ENCODE measurements at regions of chr6 and their contacts with region 1.

Region 1: GRCh38 chr6:158026054-158026900 is 44.6 kb downstream of the SYNJ2 start:
- DNase-seq: peak; percentile 90
- H3K4me3 Mint-ChIP-seq: peak overlapping the region; percentile 77
- H3K27ac Mint-ChIP-seq: peak overlapping the region; percentile 98
- H3K4me1 Mint-ChIP-seq: peaks cover 29% of the 10 kb centered on the region
- H3K27me3 Mint-ChIP-seq: no peaks in the 10 kb centered on the region

Region 2: DNA sequence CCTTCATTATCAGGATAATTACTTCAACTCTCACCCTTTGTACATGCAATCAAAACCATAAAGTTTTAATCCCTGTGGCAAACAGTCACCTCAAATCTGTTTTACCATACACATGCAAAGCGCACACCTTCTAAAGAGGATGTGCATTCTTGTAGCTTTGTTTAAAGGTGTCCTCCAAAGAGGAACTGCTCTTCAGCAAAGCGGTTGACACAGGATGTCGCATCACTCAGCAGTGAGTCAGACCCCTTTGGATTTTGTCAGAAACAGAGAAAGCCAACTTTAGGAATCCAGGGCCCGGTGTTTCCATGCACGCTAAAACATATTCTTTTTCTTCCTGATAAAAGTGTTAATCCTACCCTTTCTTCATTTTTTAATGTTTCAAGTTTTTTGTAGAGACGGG is 1517.4 kb before region 1 on chr6:
- CTCF ChIA-PET with region 1: no interaction called
- POLR2A ChIA-PET with region 1: no interaction called
- intact Hi-C with region 1: no loop called
- DNase-seq: no peak
- H3K4me3 Mint-ChIP-seq: no peak overlapping the region
- H3K27ac Mint-ChIP-seq: no peak overlapping the region
- H3K4me1 Mint-ChIP-seq: no peaks in the 10 kb centered on the region
- H3K27me3 Mint-ChIP-seq: peaks cover 11% of the 10 kb centered on the region

Region 3: GRCh38 chr6:157688960-157689599 is 337.2 kb before region 1 on chr6:
- CTCF ChIA-PET with region 1: no interaction called
- POLR2A ChIA-PET with region 1: no interaction called
- intact Hi-C with region 1: no loop called
- DNase-seq: no peak
- H3K4me3 Mint-ChIP-seq: no peak overlapping the region
- H3K27ac Mint-ChIP-seq: no peak overlapping the region
- H3K4me1 Mint-ChIP-seq: no peaks in the 10 kb centered on the region
- H3K27me3 Mint-ChIP-seq: peaks cover 3% of the 10 kb centered on the region

Region 4: GRCh38 chr6:157699777-157700636 is 326.3 kb before region 1 on chr6:
- CTCF ChIA-PET with region 1: no interaction called
- POLR2A ChIA-PET with region 1: no interaction called
- intact Hi-C with region 1: no loop called
- DNase-seq: no peak
- H3K4me3 Mint-ChIP-seq: no peak overlapping the region
- H3K27ac Mint-ChIP-seq: no peak overlapping the region
- H3K4me1 Mint-ChIP-seq: no peaks in the 10 kb centered on the region
- H3K27me3 Mint-ChIP-seq: peaks cover 3% of the 10 kb centered on the region

Region 5: DNA sequence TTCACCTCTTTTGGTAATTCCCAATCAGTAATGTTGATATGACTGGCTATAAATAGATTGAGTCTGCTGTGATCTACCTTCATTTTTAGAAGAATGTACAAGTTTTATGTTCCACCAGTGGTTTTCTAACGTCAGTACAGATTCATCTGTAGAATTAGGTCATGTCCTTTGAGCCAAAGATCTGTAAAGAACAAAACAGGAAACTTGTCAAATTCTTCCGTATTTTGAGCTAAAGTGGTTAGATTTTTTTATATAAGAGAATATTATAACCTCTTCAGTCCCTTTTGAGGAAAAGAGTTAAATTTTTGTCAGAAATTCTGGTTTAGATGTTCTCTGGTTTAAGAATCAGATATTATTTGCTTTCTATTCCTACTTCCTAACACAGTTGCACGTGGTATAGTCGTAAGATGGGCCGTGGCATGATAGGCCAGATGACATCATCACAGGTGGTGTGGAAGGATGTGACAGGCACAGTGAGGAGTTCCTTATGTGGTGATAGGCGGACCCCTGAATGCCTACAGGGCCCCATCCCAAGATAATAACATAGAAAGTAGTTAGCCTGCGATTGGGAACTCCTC is 141.0 kb before region 1 on chr6:
- CTCF ChIA-PET with region 1: interaction called, 4 read pairs
- POLR2A ChIA-PET with region 1: interaction called, 3 read pairs
- intact Hi-C with region 1: loop called (anchors 2 kb)
- DNase-seq: peak; percentile 75
- H3K4me3 Mint-ChIP-seq: no peak overlapping the region
- H3K27ac Mint-ChIP-seq: peak overlapping the region; percentile 94
- H3K4me1 Mint-ChIP-seq: peaks cover 68% of the 10 kb centered on the region
- H3K27me3 Mint-ChIP-seq: no peaks in the 10 kb centered on the region

Region 6: DNA sequence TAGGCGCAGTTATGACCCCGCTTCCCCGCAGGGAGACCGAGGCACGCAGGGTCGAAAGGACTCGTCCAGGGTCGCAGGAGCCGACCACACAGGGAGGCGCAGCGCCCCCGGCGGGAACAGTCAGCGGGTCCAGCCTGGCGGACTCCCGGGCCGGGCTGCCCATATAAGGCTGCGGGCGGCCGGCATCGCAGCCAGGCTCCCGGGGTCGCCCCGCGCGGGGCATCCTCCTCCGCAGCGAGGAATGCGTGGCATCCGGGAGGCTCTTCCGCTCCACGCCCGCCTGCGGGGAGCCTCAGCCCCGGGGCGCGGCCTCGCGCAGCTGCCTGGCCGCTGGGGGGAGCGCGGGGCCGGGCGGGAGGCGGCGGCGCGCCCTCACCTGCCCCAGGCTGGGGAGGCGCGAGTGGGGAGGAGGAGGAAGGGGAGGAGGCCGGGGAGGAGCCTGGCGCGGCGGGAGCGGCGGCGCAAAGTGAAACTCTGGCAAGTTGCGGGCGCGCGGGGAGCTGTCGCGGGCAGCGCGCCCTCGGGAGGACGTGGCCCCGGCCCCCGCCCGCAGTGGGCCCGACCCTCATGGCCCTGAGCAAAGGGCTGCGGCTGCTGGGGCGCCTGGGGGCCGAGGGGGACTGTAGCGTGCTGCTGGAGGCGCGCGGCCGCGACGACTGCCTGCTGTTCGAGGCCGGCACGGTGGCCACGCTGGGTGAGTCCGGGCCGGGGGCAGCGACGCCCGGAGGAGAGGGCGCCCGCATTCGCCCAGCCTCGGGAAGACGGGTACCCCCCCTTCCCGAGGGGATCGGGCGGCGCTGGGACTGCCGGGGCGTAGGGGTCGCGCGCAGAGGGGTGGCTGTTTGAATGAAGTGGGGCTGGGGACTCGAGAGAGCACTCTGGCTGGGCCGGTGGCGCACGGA is 44.6 kb before region 1 on chr6 and contains the start of gene SYNJ2:
- CTCF ChIA-PET with region 1: interaction called, 62 read pairs
- POLR2A ChIA-PET with region 1: interaction called, 14 read pairs
- intact Hi-C with region 1: loop called (anchors 1 kb)
- DNase-seq: peak; percentile 89
- H3K4me3 Mint-ChIP-seq: peak within 1 kb of the TSS; percentile 89
- H3K27ac Mint-ChIP-seq: peak within 1 kb of the TSS; percentile 74
- H3K4me1 Mint-ChIP-seq: peaks cover 36% of the 10 kb centered on the region
- H3K27me3 Mint-ChIP-seq: no peaks in the 10 kb centered on the region
- total RNA-seq, gene SYNJ2: 32.2 to 32.3 TPM

Region 7: DNA sequence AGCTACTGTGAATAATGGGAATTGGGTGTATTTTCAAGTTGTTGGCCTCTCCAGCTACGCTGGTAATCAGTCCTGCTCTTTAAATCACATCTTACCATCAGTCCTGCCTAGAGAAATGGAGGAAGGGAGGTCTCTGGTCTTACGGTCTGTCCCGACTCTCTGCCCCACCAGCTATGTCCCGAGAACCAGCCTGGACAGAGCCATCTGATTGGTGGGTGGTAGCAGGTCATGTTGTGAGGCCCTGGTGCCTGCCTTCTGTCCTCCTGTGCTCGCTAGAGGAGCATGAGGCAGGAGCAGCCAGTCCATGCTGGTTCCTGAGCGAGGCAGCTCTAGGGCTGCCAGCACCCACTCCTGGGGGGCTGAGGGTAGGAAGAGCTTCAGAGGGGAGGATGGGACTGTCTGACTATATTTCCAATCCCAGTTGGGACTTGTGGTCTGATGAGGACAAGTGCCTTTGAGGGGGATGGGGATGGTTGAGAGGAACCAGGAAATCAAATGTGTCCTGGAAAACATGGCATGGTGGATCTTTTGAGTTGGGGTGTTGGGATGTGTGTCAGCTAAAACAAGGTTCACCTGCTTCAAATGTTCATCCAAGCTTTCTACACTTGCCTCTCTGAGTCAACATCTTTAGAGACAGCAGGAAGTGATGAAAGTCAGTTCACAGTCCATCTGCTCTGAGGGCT is 11.6 kb before region 1 on chr6:
- CTCF ChIA-PET with region 1: interaction called, 28 read pairs
- POLR2A ChIA-PET with region 1: interaction called, 6 read pairs
- intact Hi-C with region 1: loop called (anchors 2 kb)
- DNase-seq: no peak
- H3K4me3 Mint-ChIP-seq: no peak overlapping the region
- H3K27ac Mint-ChIP-seq: peak overlapping the region; percentile 77
- H3K4me1 Mint-ChIP-seq: peaks cover 48% of the 10 kb centered on the region
- H3K27me3 Mint-ChIP-seq: no peaks in the 10 kb centered on the region

Region 8: GRCh38 chr6:158060455-158061360 is 34.4 kb after region 1 on chr6:
- CTCF ChIA-PET with region 1: interaction called, 12 read pairs
- POLR2A ChIA-PET with region 1: interaction called, 13 read pairs
- intact Hi-C with region 1: loop called (anchors 1 kb)
- DNase-seq: no peak
- H3K4me3 Mint-ChIP-seq: no peak overlapping the region
- H3K27ac Mint-ChIP-seq: no peak overlapping the region
- H3K4me1 Mint-ChIP-seq: peaks cover 31% of the 10 kb centered on the region
- H3K27me3 Mint-ChIP-seq: no peaks in the 10 kb centered on the region

Measured in activated CD4-positive, alpha-beta memory T cell treated with anti-CD3 and anti-CD28 coated beads for 36 hours (primary cell).